Activated naive CD4-positive, alpha-beta T cell treated with anti-CD3 and anti-CD28 coated beads, Interleukin-2, amount 10 ng/mL, durations not matched to agents 7 days and 5 days (primary cell): ENCODE measurements at regions of chr1 and their contacts with region 1.

Region 1: GRCh38 chr1:175319418-175320230 is 127.0 kb upstream of the KIAA0040 start:
- DNase-seq: peak; percentile 78
- H3K4me3 Mint-ChIP-seq: no peak overlapping the region
- H3K27ac Mint-ChIP-seq: no peak overlapping the region
- H3K4me1 Mint-ChIP-seq: peaks cover 9% of the 10 kb centered on the region
- H3K27me3 Mint-ChIP-seq: peaks cover 49% of the 10 kb centered on the region

Region 2: GRCh38 chr1:175146529-175147213 is 173.0 kb before region 1 on chr1:
- CTCF ChIA-PET with region 1: interaction called, 293 read pairs
- DNase-seq: peak; percentile 78
- H3K4me3 Mint-ChIP-seq: no peak overlapping the region
- H3K27ac Mint-ChIP-seq: peak overlapping the region; percentile 47
- H3K4me1 Mint-ChIP-seq: peaks cover 5% of the 10 kb centered on the region
- H3K27me3 Mint-ChIP-seq: peaks cover 48% of the 10 kb centered on the region

Region 3: GRCh38 chr1:175192630-175193526 is 126.7 kb before region 1 on chr1 and contains the start of gene KIAA0040:
- CTCF ChIA-PET with region 1: interaction called, 39 read pairs
- DNase-seq: peak; percentile 69
- H3K4me3 Mint-ChIP-seq: peak within 1 kb of the TSS; percentile 93
- H3K27ac Mint-ChIP-seq: peak within 1 kb of the TSS; percentile 91
- H3K4me1 Mint-ChIP-seq: peaks cover 76% of the 10 kb centered on the region
- H3K27me3 Mint-ChIP-seq: no peaks in the 10 kb centered on the region

Region 4: GRCh38 chr1:175208773-175209492 is 110.7 kb before region 1 on chr1:
- CTCF ChIA-PET with region 1: interaction called, 17 read pairs
- DNase-seq: peak; percentile 76
- H3K4me3 Mint-ChIP-seq: peak overlapping the region; percentile 71
- H3K27ac Mint-ChIP-seq: peak overlapping the region; percentile 99
- H3K4me1 Mint-ChIP-seq: peaks cover 71% of the 10 kb centered on the region
- H3K27me3 Mint-ChIP-seq: no peaks in the 10 kb centered on the region

Region 5: DNA sequence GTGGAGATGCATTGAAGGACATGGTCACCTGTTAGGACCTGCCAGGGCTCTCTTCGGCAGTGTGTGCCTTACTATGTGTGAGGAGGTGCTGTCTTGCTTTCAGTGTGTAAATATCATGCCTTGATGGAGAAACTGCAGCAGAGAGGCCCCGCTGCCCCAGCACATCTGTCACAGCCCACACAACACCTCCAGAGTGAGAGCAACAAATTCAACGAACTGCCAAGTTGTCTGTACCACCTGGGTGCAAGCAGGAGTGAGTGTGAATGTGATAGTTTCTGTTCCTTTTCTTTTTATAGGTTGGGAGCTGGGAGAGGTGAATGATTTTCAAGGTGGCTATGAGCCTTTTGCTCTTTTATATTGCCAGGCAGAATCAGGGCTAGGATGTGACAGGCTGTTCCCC is 12.5 kb before region 1 on chr1:
- CTCF ChIA-PET with region 1: interaction called, 40 read pairs
- DNase-seq: no peak
- H3K4me3 Mint-ChIP-seq: no peak overlapping the region
- H3K27ac Mint-ChIP-seq: no peak overlapping the region
- H3K4me1 Mint-ChIP-seq: no peaks in the 10 kb centered on the region
- H3K27me3 Mint-ChIP-seq: peaks cover 57% of the 10 kb centered on the region

Region 6: GRCh38 chr1:175331891-175332290 is 12.3 kb after region 1 on chr1:
- CTCF ChIA-PET with region 1: interaction called, 16 read pairs
- DNase-seq: no peak
- H3K4me3 Mint-ChIP-seq: no peak overlapping the region
- H3K27ac Mint-ChIP-seq: no peak overlapping the region
- H3K4me1 Mint-ChIP-seq: no peaks in the 10 kb centered on the region
- H3K27me3 Mint-ChIP-seq: peaks cover 39% of the 10 kb centered on the region

Region 7: GRCh38 chr1:175338387-175339135 is 18.9 kb after region 1 on chr1:
- CTCF ChIA-PET with region 1: interaction called, 16 read pairs
- DNase-seq: peak; percentile 76
- H3K4me3 Mint-ChIP-seq: no peak overlapping the region
- H3K27ac Mint-ChIP-seq: no peak overlapping the region
- H3K4me1 Mint-ChIP-seq: no peaks in the 10 kb centered on the region
- H3K27me3 Mint-ChIP-seq: peaks cover 46% of the 10 kb centered on the region

Region 8: GRCh38 chr1:175353066-175353465 is 33.4 kb after region 1 on chr1:
- CTCF ChIA-PET with region 1: no interaction called
- DNase-seq: no peak
- H3K4me3 Mint-ChIP-seq: no peak overlapping the region
- H3K27ac Mint-ChIP-seq: no peak overlapping the region
- H3K4me1 Mint-ChIP-seq: no peaks in the 10 kb centered on the region
- H3K27me3 Mint-ChIP-seq: peaks cover 11% of the 10 kb centered on the region